ENCODE measurements at regions of chr2 and their contacts with region 1.

Region 1: GRCh38 chr2:64330281-64331113 is 123.5 kb upstream of the LGALSL start:
- DNase-seq: peak in 1 of 2 experiments; percentile 88
- ATAC-seq: peak; percentile 64 to 87; a peak in 5 of 6 replicates
- H3K4me3 ChIP-seq: no peak overlapping the region
- H3K27ac ChIP-seq: no peak overlapping the region; a peak in 1 of 6 replicates
- H3K4me1 ChIP-seq: peaks cover 12% of the 10 kb centered on the region
- CTCF ChIP-seq: peak; percentile 98
- EP300 ChIP-seq: no peak
- POLR2A ChIP-seq: no peak
- RAD21 ChIP-seq: peak; percentile 99

Region 2: GRCh38 chr2:64052468-64053241 is 277.8 kb before region 1 on chr2:
- CTCF ChIA-PET with region 1: interaction called, 194 read pairs
- POLR2A ChIA-PET with region 1: interaction called, 4 read pairs
- DNase-seq: no peak
- ATAC-seq: no peak
- H3K4me3 ChIP-seq: no peak overlapping the region
- H3K27ac ChIP-seq: no peak overlapping the region
- H3K4me1 ChIP-seq: no peaks in the 10 kb centered on the region
- CTCF ChIP-seq: no peak
- EP300 ChIP-seq: no peak
- POLR2A ChIP-seq: no peak
- RAD21 ChIP-seq: no peak

Region 3: GRCh38 chr2:64359892-64360657 is 29.6 kb after region 1 on chr2:
- CTCF ChIA-PET with region 1: interaction called, 192 read pairs
- POLR2A ChIA-PET with region 1: no interaction called
- DNase-seq: peak; percentile 82
- ATAC-seq: peak; percentile 96 to 98
- H3K4me3 ChIP-seq: no peak overlapping the region
- H3K27ac ChIP-seq: peak overlapping the region; percentile 37 to 75; a peak in 5 of 6 replicates
- H3K4me1 ChIP-seq: peaks cover 18% of the 10 kb centered on the region
- CTCF ChIP-seq: peak; percentile 21; the same call in 1 of the 3 replicates
- EP300 ChIP-seq: no peak
- POLR2A ChIP-seq: no peak
- RAD21 ChIP-seq: peak in 1 of 2 experiments; percentile 15; a peak in 2 of 5 replicates

Region 4: DNA sequence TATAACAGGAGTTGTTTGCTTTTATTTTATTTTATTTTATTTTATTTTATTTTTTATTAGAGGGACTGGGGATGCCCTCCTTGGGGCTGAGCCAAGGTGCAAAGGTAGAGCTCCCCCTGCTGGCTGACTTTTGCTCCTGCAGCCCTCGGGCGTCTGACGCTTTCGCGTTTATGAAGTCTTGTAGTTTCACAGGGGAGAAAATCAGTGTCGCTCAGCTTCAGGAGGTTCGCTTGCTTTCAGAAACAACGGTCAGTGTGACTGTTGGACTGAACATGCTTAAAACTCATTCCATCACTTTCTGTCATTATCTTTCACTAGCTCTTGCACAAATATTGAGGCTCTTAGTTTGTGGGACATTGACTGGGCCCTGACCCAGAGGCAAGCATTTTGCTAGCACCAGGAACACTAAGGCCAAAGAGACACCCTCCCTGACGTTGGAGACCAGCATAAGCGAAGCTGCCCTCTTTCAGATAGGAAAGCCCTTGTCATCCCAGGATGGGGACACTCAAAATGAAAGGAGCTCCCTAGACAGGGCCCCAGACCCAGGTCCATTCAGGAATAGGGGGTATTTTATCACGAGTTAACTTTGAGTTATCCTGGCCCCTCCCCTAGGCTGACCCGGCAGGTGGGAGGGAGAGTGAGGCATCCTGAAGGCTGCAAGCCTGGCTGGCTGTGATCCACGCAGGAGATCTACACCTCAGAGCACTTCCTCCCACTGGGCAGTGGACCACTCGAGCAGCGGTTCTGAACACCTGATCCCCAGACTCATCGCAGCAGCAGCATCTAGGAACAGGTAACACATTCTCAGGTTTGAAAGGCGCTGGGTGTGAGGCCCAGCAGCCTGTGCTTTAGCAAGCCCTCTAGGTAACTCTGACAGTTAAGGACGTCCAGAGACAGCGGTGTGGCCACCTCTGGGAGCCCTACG is 157.8 kb after region 1 on chr2:
- CTCF ChIA-PET with region 1: interaction called, 533 read pairs
- POLR2A ChIA-PET with region 1: interaction called, 7 read pairs
- DNase-seq: peak; percentile 71 to 73
- ATAC-seq: peak; percentile 60 to 91; a peak in 4 of 6 replicates
- H3K4me3 ChIP-seq: no peak overlapping the region
- H3K27ac ChIP-seq: no peak overlapping the region
- H3K4me1 ChIP-seq: no peaks in the 10 kb centered on the region
- CTCF ChIP-seq: peak; percentile 99
- EP300 ChIP-seq: no peak
- POLR2A ChIP-seq: no peak
- RAD21 ChIP-seq: peak; percentile 85 to 89

Region 5: GRCh38 chr2:64523666-64524603 is 193.4 kb after region 1 on chr2 and contains the start of gene AFTPH:
- CTCF ChIA-PET with region 1: interaction called, 32 read pairs
- POLR2A ChIA-PET with region 1: interaction called, 3 read pairs
- DNase-seq: peak; percentile 98 to 99
- ATAC-seq: peak; percentile 95 to 98
- H3K4me3 ChIP-seq: peak within 1 kb of the TSS; percentile 89
- H3K27ac ChIP-seq: peak within 1 kb of the TSS; percentile 86 to 96
- H3K4me1 ChIP-seq: peaks cover 15% of the 10 kb centered on the region; the same call in 2 of the 3 replicates
- CTCF ChIP-seq: no peak; the same call in 2 of the 3 replicates
- EP300 ChIP-seq: no peak
- POLR2A ChIP-seq: peak; percentile 61
- RAD21 ChIP-seq: no peak
- polyA plus RNA-seq, gene AFTPH: 51.4 and 56.6 TPM in 2 replicates

Region 6: GRCh38 chr2:64609227-64609941 is 278.9 kb after region 1 on chr2:
- CTCF ChIA-PET with region 1: interaction called, 13 read pairs
- POLR2A ChIA-PET with region 1: no interaction called
- DNase-seq: peak; percentile 80 to 88
- ATAC-seq: peak; percentile 90
- H3K4me3 ChIP-seq: peak overlapping the region; percentile 55
- H3K27ac ChIP-seq: peak overlapping the region; percentile 85 to 97
- H3K4me1 ChIP-seq: 0 out of 3 replicates have a peak, but pooled peaks cover 4% of the 10 kb centered on the region
- CTCF ChIP-seq: peak; percentile 92
- EP300 ChIP-seq: no peak
- POLR2A ChIP-seq: peak; percentile 77; the same call in 1 of the 2 replicates
- RAD21 ChIP-seq: peak; percentile 6 to 65; a peak in 3 of 5 replicates

Measured in A549 (cell line).